ENCODE measurements at regions of chr2 and their contacts with region 1.

Region 1: GRCh38 chr2:226445216-226445861 is 354.3 kb downstream of the IRS1 start:
- DNase-seq: no peak
- H3K4me3 ChIP-seq: no peak overlapping the region
- H3K27ac ChIP-seq: peak overlapping the region; percentile 66
- H3K4me1 ChIP-seq: peaks cover 24% of the 10 kb centered on the region
- H3K27me3 ChIP-seq: no peaks in the 10 kb centered on the region
- CTCF ChIP-seq: no peak

Region 2: GRCh38 chr2:226169751-226170581 is 275.4 kb before region 1 on chr2:
- CTCF ChIA-PET with region 1: no interaction called
- POLR2A ChIA-PET with region 1: no interaction called
- intact Hi-C with region 1: no loop called
- DNase-seq: no peak
- H3K4me3 ChIP-seq: no peak overlapping the region
- H3K27ac ChIP-seq: no peak overlapping the region
- H3K4me1 ChIP-seq: no peaks in the 10 kb centered on the region
- H3K27me3 ChIP-seq: no peaks in the 10 kb centered on the region
- CTCF ChIP-seq: no peak

Region 3: DNA sequence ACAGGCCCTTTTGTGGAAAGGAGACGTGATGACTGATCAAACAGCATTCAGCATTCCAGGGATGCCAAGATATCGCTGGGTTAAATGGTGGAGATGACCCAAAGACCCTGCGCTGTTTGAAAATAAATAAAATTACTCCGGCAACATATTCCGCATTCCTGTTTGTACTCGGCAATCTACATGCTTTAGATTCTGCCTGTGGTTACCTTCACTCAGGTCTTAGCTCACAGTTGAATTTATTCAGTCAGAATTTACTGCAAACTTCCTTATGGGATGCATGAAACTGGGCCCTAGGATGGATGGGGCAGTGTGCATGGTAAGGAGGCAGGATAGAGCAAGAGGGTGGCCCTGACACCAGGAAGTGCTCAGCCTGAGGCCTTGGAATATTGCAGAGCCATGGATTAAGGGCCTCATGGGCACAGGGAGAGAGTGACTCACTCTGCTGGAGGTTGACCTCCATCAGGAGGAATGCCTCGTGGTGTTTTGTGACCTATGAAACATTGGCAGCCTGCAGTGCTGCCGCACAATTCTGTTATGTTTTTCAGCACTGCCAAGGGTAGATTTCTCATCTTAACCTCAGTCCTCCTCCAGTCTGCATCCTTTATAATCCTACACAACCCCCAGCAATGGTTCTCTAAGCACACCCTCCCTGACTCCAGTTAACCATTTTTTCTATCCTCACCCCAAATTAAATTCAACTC is 32.9 kb after region 1 on chr2:
- CTCF ChIA-PET with region 1: no interaction called
- POLR2A ChIA-PET with region 1: interaction called, 11 read pairs
- intact Hi-C with region 1: no loop called
- DNase-seq: peak; percentile 8
- H3K4me3 ChIP-seq: no peak overlapping the region
- H3K27ac ChIP-seq: no peak overlapping the region
- H3K4me1 ChIP-seq: no peaks in the 10 kb centered on the region
- H3K27me3 ChIP-seq: no peaks in the 10 kb centered on the region
- CTCF ChIP-seq: no peak

Region 4: DNA sequence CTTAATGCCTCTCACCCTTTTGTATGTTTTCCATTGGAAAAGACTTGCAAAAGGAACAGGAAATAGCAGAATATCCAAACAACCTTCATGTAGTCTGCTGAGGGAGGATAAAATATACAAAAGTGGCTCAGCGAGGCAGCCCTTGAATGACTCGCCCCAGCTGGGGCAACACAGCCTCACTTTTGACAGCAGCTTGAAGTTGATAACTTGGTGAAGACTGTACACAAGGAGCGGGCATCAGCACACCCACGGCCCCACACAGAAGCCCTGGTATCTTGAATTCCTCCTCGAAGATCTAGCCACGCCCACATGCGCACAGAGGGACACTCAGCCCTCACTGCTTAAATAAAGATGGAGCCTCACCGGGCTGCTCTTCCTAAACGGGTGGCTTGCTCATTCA is 193.2 kb after region 1 on chr2:
- CTCF ChIA-PET with region 1: no interaction called
- POLR2A ChIA-PET with region 1: no interaction called
- intact Hi-C with region 1: no loop called
- DNase-seq: no peak
- H3K4me3 ChIP-seq: no peak overlapping the region
- H3K27ac ChIP-seq: no peak overlapping the region
- H3K4me1 ChIP-seq: peaks cover 9% of the 10 kb centered on the region
- H3K27me3 ChIP-seq: no peaks in the 10 kb centered on the region
- CTCF ChIP-seq: no peak

Region 5: GRCh38 chr2:227280895-227281294 is 835.6 kb after region 1 on chr2:
- CTCF ChIA-PET with region 1: no interaction called
- POLR2A ChIA-PET with region 1: no interaction called
- intact Hi-C with region 1: no loop called
- DNase-seq: no peak
- H3K4me3 ChIP-seq: no peak overlapping the region
- H3K27ac ChIP-seq: no peak overlapping the region
- H3K4me1 ChIP-seq: no peaks in the 10 kb centered on the region
- H3K27me3 ChIP-seq: no peaks in the 10 kb centered on the region
- CTCF ChIP-seq: no peak